ENCODE measurements at regions of chr11 and their contacts with region 1.

Region 1: DNA sequence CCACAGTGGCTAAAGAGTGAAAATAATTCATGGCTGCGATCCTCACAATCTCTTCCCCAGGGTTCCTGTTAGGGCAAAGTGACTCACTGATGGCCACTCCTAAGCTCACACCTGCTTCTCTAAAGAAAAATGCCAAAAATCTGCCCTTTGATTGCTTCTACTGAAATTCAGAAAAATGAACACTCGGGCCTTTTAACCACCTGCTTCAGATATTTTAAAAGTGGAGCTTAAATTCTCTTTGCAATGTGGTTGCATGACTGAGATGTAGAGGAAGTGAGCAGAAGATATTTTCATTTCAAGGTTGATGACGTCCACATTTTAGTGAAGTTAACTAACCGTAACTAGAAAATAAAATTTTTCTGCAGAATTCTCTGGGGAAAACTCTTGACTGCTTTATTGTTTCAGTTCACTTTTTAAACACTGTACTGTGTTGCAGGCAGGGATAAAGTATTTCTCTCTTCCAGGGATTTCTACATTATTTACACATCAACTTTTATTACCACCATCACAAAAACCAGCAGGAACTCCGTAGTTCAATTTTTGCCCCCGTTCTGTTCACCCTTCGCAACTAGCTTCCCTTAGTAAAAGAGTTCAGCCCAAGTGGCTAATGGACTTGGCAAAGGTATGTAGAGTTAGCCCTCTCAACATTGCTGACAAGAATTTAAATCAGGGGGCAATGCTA is 8.5 kb downstream of the RAB30 start:
- DNase-seq: no peak
- ATAC-seq: peak; percentile 72
- H3K4me3 Mint-ChIP-seq: peak overlapping the region; percentile 87
- H3K27ac Mint-ChIP-seq: no peak overlapping the region
- H3K4me1 Mint-ChIP-seq: peaks cover 94% of the 10 kb centered on the region
- H3K27me3 Mint-ChIP-seq: no peaks in the 10 kb centered on the region
- CTCF ChIP-seq: no peak

Region 2: GRCh38 chr11:82927254-82927880 is 135.8 kb before region 1 on chr11:
- CTCF ChIA-PET with region 1: interaction called, 4 read pairs
- POLR2A ChIA-PET with region 1: interaction called, 21 read pairs
- intact Hi-C with region 1: no loop called
- DNase-seq: no peak
- ATAC-seq: peak; percentile 76
- H3K4me3 Mint-ChIP-seq: peak overlapping the region; percentile 45
- H3K27ac Mint-ChIP-seq: peak overlapping the region; percentile 75
- H3K4me1 Mint-ChIP-seq: peaks cover 85% of the 10 kb centered on the region
- H3K27me3 Mint-ChIP-seq: no peaks in the 10 kb centered on the region
- CTCF ChIP-seq: no peak

Region 3: DNA sequence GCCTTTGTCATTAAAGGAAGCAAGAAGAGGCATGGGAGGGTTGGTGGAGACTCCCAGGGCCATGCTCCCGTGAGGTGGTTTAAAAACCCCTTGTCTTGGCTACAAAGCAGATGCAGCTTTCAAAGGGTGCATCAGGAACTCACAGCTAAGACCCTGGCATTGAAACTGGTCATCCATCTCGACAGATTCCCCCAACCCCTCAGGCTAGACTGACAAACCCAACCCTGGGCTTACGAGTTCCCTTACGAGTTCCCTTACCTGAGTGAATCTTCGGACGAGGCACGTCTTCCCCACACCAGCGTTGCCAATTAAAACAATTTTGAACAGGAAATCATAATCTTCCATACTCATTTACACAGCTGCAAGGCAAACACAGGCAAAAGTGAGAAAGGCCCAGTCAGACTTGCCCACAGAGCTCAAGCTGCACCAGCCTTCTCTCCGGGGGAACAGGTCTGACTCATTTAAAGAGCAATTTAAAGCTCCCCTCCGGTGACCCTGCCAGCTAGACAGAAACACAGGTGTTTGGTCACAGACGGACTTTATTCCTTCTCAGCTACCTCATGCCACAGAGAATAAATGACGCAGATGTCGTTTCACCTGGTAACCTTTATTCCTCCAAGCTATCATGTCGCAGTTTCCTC is 66.1 kb before region 1 on chr11:
- CTCF ChIA-PET with region 1: interaction called, 3 read pairs
- POLR2A ChIA-PET with region 1: interaction called, 97 read pairs
- intact Hi-C with region 1: loop called (anchors 1 kb)
- DNase-seq: no peak
- ATAC-seq: peak; percentile 88
- H3K4me3 Mint-ChIP-seq: peak overlapping the region; percentile 75
- H3K27ac Mint-ChIP-seq: peak overlapping the region; percentile 84
- H3K4me1 Mint-ChIP-seq: peaks cover 93% of the 10 kb centered on the region
- H3K27me3 Mint-ChIP-seq: no peaks in the 10 kb centered on the region
- CTCF ChIP-seq: no peak

Region 4: DNA sequence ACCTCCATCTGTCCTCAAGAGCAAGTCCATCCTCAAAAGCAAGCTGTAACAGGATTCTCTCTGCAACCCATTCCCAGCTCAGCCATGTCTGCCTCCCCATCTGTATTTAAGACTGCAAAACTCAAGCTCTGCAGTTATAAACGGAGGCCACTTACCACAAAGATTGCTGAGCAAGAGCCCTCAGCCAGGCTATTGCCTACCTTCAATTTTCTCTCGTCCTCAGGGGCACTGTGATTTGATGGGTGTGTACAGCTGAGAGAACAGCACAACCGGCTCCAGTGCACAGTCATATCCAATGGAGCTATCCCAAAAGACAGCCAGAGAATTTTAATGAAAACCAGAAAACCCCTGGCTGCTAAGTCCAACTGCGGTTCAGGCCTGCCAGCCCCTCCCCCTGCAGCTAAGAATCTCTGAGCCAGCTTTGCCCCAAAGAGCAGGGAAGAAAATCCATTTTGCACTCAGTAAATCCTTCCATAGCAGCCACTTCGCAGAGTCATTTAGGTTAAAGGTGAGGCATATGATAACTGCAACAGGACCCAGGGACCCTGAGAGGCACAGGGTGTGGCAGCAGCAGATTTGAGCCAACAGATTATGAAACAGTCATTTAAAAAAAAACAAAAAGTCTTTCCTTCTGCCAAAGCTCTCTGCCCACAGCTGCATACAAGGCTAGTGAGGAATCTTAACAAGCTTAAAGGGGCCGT is 29.1 kb before region 1 on chr11:
- CTCF ChIA-PET with region 1: interaction called, 3 read pairs
- POLR2A ChIA-PET with region 1: interaction called, 54 read pairs
- intact Hi-C with region 1: loop called (anchors 1 kb)
- DNase-seq: no peak
- ATAC-seq: no peak
- H3K4me3 Mint-ChIP-seq: peak overlapping the region; percentile 62
- H3K27ac Mint-ChIP-seq: peak overlapping the region; percentile 75
- H3K4me1 Mint-ChIP-seq: peaks cover 79% of the 10 kb centered on the region
- H3K27me3 Mint-ChIP-seq: no peaks in the 10 kb centered on the region
- CTCF ChIP-seq: no peak

Region 5: GRCh38 chr11:83051760-83052671 is 11.2 kb before region 1 on chr11:
- CTCF ChIA-PET with region 1: interaction called, 10 read pairs
- POLR2A ChIA-PET with region 1: interaction called, 42 read pairs
- intact Hi-C with region 1: loop called (anchors 1 kb)
- DNase-seq: no peak
- ATAC-seq: no peak
- H3K4me3 Mint-ChIP-seq: no peak overlapping the region
- H3K27ac Mint-ChIP-seq: peak overlapping the region; percentile 41
- H3K4me1 Mint-ChIP-seq: peaks cover 90% of the 10 kb centered on the region
- H3K27me3 Mint-ChIP-seq: no peaks in the 10 kb centered on the region
- CTCF ChIP-seq: no peak

Region 6: DNA sequence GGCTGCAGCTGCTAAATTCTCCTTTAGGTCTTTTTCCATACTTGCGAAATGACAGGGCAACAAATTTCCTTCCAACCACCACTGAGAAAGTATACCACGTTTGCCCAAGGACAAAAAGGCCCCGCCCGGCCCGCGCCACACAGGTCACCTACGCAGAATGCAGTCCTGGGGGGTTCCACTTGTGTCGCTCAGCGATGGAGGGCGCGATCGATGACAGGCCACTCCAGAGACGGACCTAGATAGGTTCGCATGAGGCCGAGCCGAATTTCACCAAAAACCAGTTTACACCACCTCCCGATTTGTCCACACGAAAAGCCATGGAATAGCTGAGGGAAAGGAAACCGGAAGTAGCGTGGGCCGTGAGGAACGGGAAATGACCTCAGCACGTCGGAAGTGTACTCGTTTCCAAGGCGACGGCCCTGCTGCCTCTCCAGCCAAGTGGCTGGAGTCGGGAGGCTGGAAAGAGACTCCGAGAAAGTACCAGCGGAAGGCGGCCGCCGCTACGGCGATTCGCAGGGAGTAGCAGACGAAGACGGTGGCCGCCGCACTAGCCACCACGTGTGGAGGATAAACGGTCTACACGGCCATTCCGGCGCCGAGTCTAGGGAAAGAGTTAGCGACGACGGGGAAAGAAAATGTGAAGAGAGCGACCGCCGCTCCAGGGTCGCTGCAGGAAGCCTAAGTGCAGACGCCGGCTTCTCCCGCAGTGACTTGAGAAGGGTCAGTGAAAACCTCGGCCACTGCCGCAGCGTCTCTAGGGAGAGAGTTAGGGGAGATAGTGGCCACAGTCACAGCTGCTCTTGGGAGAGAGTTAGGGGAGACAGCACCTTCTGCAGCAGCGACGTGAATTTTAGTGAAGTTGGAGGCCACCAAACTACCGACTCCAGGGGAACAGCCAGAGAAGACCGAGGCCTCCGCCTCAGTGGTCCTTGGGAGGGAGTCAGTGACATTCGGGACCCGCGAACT is 130.4 kb after region 1 on chr11 and contains the start of gene ANKRD42:
- CTCF ChIA-PET with region 1: no interaction called
- POLR2A ChIA-PET with region 1: interaction called, 4 read pairs
- intact Hi-C with region 1: loop called (anchors 1 kb)
- DNase-seq: peak; percentile 75
- ATAC-seq: peak; percentile 63
- H3K4me3 Mint-ChIP-seq: peak within 1 kb of the TSS; percentile 100
- H3K27ac Mint-ChIP-seq: peak within 1 kb of the TSS; percentile 98
- H3K4me1 Mint-ChIP-seq: peaks cover 51% of the 10 kb centered on the region
- H3K27me3 Mint-ChIP-seq: no peaks in the 10 kb centered on the region
- CTCF ChIP-seq: no peak
- total RNA-seq, gene ANKRD42: 6.6 and 7.4 TPM in 2 replicates